ENCODE measurements at regions of chr14 and their contacts with region 1.

Region 1: GRCh38 chr14:105203057-105203531 is 22.0 kb upstream of the NUDT14 start:
- DNase-seq: peak; percentile 42 to 59 (median 57)
- H3K4me3 ChIP-seq: no peak overlapping the region
- H3K4me3 Mint-ChIP-seq: no peak overlapping the region
- H3K27ac ChIP-seq: no peak overlapping the region
- H3K27ac Mint-ChIP-seq: no peak overlapping the region
- H3K4me1 ChIP-seq: peaks cover 21 to 25% of the 10 kb centered on the region in 2 donors
- H3K4me1 Mint-ChIP-seq: peaks cover 19% of the 10 kb centered on the region
- H3K27me3 ChIP-seq: peaks cover 0 to 52% of the 10 kb centered on the region in 2 donors
- H3K27me3 Mint-ChIP-seq: peaks cover 38 to 69% (median 38%) of the 10 kb centered on the region in 3 donors
- CTCF ChIP-seq: peak; percentile 98

Region 2: GRCh38 chr14:105123981-105124765 is 78.9 kb before region 1 on chr14:
- intact Hi-C with region 1: no loop called
- DNase-seq: no peak
- H3K4me3 ChIP-seq: no peak overlapping the region
- H3K4me3 Mint-ChIP-seq: peak overlapping the region in 1 of 2 donors; percentile 26
- H3K27ac ChIP-seq: no peak overlapping the region
- H3K27ac Mint-ChIP-seq: no peak overlapping the region
- H3K4me1 ChIP-seq: no peaks in the 10 kb centered on the region
- H3K4me1 Mint-ChIP-seq: no peaks in the 10 kb centered on the region
- H3K27me3 ChIP-seq: peaks cover 0 to 3% of the 10 kb centered on the region in 2 donors
- H3K27me3 Mint-ChIP-seq: peaks cover 3 to 32% (median 23%) of the 10 kb centered on the region in 3 donors
- CTCF ChIP-seq: no peak

Region 3: DNA sequence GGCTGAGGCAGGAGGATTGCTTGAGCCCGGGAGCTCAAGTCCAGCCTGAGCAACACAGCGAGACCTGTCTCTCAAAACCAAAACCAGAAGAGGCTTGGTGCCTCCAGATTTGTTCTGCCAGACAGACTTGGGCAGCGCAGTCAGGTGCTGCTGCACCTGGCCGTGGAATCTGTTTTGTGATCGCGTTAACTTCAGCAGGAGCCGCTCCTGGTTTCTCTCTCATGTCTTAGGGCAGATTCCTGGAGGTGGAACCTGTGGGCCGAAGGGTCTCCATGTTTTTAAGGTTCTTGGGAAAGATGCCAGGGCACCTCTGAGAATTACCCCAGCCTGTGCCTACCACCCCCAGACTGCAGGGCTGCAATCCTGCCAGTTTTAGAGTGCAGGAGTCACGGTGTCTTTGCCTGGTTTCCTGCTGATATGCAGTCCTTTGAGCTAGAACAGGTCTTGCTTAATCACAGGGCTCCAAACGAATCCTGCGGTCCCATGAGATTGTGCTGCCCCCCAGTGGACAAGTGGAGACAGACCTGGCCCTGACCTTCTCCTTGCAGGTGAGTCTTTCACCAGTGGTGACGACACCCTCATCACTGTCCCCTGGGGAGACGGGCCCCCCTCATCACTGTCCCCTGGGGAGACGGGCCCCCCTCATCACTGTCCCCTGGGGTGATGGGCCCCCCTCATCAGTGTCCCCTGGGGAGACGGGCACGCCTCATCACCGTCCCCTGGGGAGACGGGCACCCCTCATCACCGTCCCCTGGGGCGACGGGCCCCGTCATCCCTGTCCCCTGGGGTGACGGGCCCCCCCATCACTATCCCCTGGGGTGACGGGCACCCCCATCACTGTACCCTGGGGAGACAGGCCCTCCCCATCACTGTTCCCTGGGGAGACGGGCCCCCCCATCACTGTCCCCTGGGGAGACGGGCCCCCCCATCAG is 149.1 kb after region 1 on chr14:
- intact Hi-C with region 1: loop called (anchors 2 kb)
- DNase-seq: peak; percentile 75 to 81 (median 81)
- H3K4me3 ChIP-seq: no peak overlapping the region
- H3K4me3 Mint-ChIP-seq: no peak overlapping the region
- H3K27ac ChIP-seq: no peak overlapping the region
- H3K27ac Mint-ChIP-seq: peak overlapping the region in 1 of 7 donors; percentile 18
- H3K4me1 ChIP-seq: peaks cover 3 to 4% of the 10 kb centered on the region in 2 donors
- H3K4me1 Mint-ChIP-seq: peaks cover 2% of the 10 kb centered on the region
- H3K27me3 ChIP-seq: no peaks in the 10 kb centered on the region
- H3K27me3 Mint-ChIP-seq: peaks cover 0 to 4% (median 0%) of the 10 kb centered on the region in 3 donors
- CTCF ChIP-seq: peak; percentile 88